Activated T-helper 1 cell treated with anti-CD3 and anti-CD28 coated beads, Interleukin-12 subunit alpha, Interleukin-12 subunit beta, Interleukin-2, Interleukin-4 antibody, amounts not matched to agents 30 ng/mL and 10 ng/mL and 1 ng/mL, durations not matched to agents 14 hours and 24 hours and 36 hours (primary cell): ENCODE measurements at regions of chr12 and their contacts with region 1.

Region 1: GRCh38 chr12:68119724-68120211 is 39.8 kb downstream of the IFNG start:
- DNase-seq: peak; percentile 74
- H3K4me3 Mint-ChIP-seq: peak overlapping the region; percentile 15
- H3K27ac Mint-ChIP-seq: no peak overlapping the region
- H3K4me1 Mint-ChIP-seq: peaks cover 48% of the 10 kb centered on the region
- H3K27me3 Mint-ChIP-seq: no peaks in the 10 kb centered on the region

Region 2: GRCh38 chr12:67698672-67699581 is 420.8 kb before region 1 on chr12:
- intact Hi-C with region 1: loop called (anchors 1 kb)
- DNase-seq: peak; percentile 34
- H3K4me3 Mint-ChIP-seq: peak overlapping the region; percentile 42
- H3K27ac Mint-ChIP-seq: peak overlapping the region; percentile 67
- H3K4me1 Mint-ChIP-seq: peaks cover 49% of the 10 kb centered on the region
- H3K27me3 Mint-ChIP-seq: peaks cover 53% of the 10 kb centered on the region

Region 3: DNA sequence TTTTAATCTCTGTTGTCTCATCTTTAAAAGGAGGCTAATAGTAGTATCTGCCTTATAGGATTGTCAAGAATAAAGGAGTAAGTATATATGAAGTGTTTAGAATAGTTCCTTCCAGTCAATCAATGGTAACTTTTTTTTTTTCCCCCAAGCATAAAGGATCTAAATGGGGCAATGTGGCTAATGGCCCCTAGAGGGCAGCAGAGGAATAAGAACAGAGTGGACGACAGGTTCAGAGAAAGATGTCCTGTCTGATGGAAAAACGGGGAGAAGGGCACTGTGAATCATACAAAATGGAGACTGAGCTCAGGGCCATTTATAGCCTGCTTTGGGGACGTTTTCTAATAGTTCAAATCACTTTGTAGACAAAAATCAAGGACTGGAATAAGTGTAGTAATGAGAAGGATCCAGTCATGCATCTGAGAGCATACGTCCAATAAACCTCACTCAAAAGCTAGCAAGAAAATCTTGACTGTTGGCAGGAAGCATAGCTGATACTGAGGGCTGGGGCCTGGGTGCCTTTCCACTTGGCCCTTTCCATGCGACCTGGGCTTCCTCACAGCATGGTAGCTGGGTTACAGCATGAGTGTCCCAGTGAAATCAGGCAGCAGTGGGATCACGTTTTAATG is 79.2 kb before region 1 on chr12:
- intact Hi-C with region 1: loop called (anchors 1 kb)
- DNase-seq: peak; percentile 56
- H3K4me3 Mint-ChIP-seq: peak overlapping the region; percentile 13
- H3K27ac Mint-ChIP-seq: peak overlapping the region; percentile 83
- H3K4me1 Mint-ChIP-seq: peaks cover 65% of the 10 kb centered on the region
- H3K27me3 Mint-ChIP-seq: no peaks in the 10 kb centered on the region

Region 4: GRCh38 chr12:68100232-68100631 is 19.5 kb before region 1 on chr12:
- intact Hi-C with region 1: no loop called
- DNase-seq: no peak
- H3K4me3 Mint-ChIP-seq: no peak overlapping the region
- H3K27ac Mint-ChIP-seq: no peak overlapping the region
- H3K4me1 Mint-ChIP-seq: peaks cover 30% of the 10 kb centered on the region
- H3K27me3 Mint-ChIP-seq: no peaks in the 10 kb centered on the region

Region 5: DNA sequence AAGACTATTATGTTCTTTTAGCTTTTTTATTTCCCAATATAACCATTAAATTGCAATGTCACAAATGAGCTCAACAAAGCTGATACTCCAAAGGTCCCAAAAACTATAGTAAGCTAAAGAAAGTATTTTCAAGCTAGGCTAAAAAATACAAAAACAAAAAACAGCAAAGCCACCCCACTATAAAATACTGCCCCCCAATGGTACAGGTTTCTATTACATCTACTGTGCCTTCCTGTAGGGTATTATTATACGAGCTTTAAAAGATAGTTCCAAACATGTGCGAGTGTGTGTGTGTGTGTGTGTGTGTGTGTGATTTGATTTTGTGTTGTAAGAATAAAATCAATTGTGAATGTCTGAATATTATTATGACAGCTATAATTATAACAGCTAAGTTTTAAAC is 38.7 kb after region 1 on chr12:
- intact Hi-C with region 1: loop called (anchors 1 kb)
- DNase-seq: no peak
- H3K4me3 Mint-ChIP-seq: peak overlapping the region; percentile 91
- H3K27ac Mint-ChIP-seq: peak overlapping the region; percentile 87
- H3K4me1 Mint-ChIP-seq: peaks cover 65% of the 10 kb centered on the region
- H3K27me3 Mint-ChIP-seq: no peaks in the 10 kb centered on the region

Region 6: DNA sequence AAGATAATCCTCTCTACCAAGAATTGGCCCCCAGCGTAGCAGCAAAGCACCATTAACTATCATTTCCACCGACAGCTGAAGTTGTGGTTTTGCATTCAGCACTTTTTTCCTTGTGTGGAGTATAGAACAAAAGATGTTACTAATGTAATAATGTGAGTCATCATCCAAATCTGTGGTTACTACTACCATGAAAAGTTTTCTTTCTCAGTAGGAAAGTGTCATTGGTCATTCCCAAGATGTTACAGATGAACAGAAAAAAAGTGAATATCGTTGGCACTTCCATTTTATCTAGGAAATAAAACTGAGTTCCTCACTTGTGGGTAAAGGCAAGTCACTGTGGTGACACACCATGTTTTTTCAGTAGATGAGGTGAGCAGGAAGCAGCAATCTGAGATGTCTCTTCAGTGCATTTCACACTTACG is 70.1 kb after region 1 on chr12:
- intact Hi-C with region 1: loop called (anchors 1 kb)
- DNase-seq: peak; percentile 41
- H3K4me3 Mint-ChIP-seq: peak overlapping the region; percentile 52
- H3K27ac Mint-ChIP-seq: peak overlapping the region; percentile 94
- H3K4me1 Mint-ChIP-seq: peaks cover 75% of the 10 kb centered on the region
- H3K27me3 Mint-ChIP-seq: no peaks in the 10 kb centered on the region

Region 7: DNA sequence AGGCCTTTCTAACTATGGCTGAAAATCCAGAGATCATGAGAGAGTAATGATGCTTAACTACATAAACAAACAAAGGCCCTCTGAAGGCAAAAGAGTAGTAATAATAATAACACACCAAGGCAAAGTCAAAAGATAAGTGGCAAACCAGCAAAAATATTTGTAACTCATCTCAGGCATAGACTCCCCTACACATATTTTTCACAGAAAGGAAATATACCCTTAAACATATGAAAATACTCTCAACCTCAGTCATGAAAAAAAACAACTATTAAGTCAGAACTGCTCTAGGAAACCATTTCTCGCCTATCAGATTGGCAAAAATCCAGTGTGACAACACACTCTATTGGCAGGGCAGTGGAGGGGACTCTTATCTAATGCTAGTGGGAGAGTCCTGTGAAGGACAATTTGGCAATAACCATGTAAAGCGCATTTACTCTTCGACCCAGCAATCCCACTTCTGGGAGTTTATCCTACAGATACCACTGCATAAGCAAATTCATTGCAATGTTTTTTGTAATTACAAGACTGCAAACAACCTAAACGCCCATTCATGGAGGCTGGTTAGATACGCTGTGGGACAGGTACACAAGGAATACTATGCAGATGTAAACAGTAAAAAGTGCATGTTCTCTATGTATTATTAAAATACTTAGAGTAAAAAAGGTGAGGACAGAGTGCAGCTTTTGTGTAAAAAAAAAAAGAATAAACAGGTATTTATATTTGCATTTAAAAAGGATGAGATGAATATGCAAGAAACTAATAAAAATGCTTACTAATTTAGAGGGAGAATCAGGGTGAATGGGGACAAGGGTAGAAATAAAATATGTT is 159.7 kb after region 1 on chr12:
- intact Hi-C with region 1: loop called (anchors 1 kb)
- DNase-seq: no peak
- H3K4me3 Mint-ChIP-seq: no peak overlapping the region
- H3K27ac Mint-ChIP-seq: peak overlapping the region; percentile 45
- H3K4me1 Mint-ChIP-seq: peaks cover 61% of the 10 kb centered on the region
- H3K27me3 Mint-ChIP-seq: no peaks in the 10 kb centered on the region

Region 8: GRCh38 chr12:68482660-68483059 is 362.9 kb after region 1 on chr12:
- intact Hi-C with region 1: loop called (anchors 2 kb)
- DNase-seq: peak; percentile 44
- H3K4me3 Mint-ChIP-seq: peak overlapping the region; percentile 66
- H3K27ac Mint-ChIP-seq: peak overlapping the region; percentile 91
- H3K4me1 Mint-ChIP-seq: peaks cover 69% of the 10 kb centered on the region
- H3K27me3 Mint-ChIP-seq: no peaks in the 10 kb centered on the region